ENCODE measurements at regions of chr1 and their contacts with region 1.

Region 1: DNA sequence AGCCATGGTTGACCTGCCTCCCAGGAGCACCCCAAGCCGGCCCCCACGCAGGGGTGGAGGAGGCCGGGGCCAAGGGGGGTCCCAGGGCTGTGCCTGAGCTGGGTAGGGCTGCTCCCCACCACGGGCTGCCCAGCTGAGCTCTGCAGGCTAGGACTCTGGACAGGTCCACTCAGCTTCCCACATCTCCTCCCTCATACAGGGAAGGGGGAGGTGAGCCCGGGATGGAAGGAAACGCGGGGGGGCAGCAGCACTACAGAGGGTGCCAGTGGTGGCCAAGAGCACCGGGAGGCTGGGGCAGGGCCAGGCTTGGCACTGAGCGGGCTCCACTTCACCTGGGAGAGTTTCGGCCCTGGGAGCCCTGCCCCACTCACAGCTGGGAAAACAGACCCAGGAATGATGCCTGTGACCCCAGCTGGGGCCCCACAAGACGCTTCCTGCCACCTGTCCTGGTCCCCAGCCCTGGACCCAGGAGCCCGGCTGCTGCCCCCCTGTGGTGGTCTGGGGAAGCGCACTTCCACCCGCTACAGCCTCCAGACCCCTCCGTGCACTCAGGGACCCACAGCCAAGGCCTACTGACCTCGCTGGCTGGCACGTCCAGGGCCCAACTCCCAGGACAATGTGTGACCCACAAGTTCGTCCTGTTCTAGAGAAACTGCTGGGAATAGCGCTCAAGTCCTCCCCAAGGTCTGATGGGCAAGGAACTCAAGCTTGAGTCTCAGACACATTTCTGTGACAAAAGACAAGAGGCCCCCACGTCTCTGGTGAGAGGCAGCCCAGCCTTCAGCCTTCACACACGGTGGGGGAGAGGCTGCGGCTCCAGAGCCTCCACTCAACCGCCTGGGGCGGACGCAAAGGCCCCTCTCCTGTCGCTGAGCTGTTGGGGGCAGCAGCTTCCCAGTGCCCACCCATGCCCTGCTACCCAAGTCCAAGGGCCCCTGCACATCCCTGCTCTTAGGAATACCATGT is 3.0 kb downstream of the AURKAIP1 start:
- DNase-seq: peak; percentile 86
- H3K4me3 Mint-ChIP-seq: peak overlapping the region; percentile 59
- H3K27ac Mint-ChIP-seq: peak overlapping the region; percentile 64
- H3K4me1 Mint-ChIP-seq: peaks cover 50% of the 10 kb centered on the region
- H3K27me3 Mint-ChIP-seq: no peaks in the 10 kb centered on the region

Region 2: DNA sequence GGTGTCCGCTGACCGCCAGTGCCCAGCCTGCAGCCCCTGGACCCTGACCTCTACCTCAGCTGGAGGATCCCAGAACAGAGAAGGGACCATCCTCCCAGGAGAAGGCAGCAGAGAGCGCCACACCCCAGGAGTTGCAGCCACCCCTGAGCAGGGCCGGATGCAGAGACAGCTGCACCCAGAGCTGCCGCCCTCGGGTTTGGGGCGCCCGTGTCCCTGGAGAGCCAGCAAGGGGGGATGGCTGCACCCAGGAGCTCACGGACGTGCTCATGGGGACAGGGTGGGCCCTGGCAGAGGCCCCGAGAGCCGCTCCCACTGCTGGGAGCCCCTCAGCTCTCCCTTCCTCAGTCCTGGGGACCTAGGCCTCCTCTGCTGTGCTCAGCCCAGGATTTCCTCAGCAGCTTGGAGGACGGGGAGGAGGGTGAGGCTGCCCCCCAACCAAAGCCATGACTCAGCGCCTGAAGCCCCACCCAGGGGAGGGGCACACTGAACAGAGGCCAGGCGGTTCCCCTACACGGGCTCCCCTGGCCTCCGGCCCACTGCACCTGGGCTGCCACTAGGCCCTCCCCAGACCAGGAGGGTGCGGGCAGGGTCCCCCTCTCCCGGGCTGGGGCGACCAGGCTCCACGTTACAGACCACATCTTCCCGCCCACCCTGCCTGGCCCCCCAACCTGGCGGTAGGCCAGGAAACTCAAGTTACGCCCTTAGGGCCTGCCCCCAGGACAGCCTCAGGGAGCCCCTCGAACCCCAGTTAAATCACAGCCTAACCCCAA is 66.5 kb before region 1 on chr1:
- CTCF ChIA-PET with region 1: interaction called, 12 read pairs
- DNase-seq: peak; percentile 86
- H3K4me3 Mint-ChIP-seq: peak overlapping the region; percentile 89
- H3K27ac Mint-ChIP-seq: peak overlapping the region; percentile 93
- H3K4me1 Mint-ChIP-seq: peaks cover 26% of the 10 kb centered on the region
- H3K27me3 Mint-ChIP-seq: no peaks in the 10 kb centered on the region

Region 3: DNA sequence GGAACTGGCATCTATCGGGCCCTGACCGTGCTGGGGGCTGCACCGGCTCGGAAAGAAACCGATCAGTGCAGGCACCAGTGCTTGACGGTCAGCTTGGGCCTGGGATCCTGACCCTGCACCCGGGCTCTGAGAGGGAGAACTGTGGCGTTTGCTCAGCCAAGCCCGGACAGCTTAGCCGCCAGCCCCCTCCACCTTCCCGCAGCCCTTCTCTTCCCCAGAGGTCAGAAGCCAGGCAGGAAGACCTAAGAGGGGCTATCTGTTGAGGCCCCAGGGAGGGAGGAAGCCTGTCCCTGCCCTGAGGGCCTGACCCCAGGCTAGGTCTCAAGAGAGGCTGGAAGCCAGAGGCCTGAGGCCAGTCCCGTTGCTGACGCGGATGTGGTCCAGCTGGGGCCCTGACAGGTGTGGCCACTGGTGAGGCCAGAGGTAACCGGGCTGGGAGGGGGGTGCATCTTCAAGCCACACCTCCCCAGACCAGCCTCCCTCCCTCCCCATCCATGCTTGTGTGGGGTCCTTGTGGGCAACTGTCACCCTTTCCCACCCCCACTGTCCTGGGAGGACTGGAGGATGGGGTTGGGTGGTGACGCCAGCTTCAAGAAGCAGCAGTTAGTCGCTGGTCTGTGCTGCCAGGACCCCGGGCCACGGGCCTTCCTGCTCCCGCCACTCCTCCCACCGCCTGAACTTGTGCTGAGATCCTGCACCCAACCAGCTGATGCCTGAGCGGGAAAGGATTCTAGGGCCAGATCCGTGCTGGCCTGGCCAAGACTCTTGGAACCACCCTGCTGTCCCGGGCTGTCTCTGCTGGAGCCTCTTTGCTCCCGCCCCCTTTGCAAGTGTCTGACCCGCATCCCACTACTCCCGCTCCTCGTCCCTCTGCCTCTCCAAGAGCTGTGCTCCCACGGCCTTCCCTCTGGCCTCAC is 20.3 kb before region 1 on chr1:
- CTCF ChIA-PET with region 1: interaction called, 21 read pairs
- DNase-seq: no peak
- H3K4me3 Mint-ChIP-seq: peak overlapping the region; percentile 63
- H3K27ac Mint-ChIP-seq: peak overlapping the region; percentile 46
- H3K4me1 Mint-ChIP-seq: peaks cover 31% of the 10 kb centered on the region
- H3K27me3 Mint-ChIP-seq: peaks cover 51% of the 10 kb centered on the region

Region 4: GRCh38 chr1:1399187-1399871 is 27.3 kb after region 1 on chr1 and contains the start of gene CCNL2:
- CTCF ChIA-PET with region 1: interaction called, 12 read pairs
- DNase-seq: peak; percentile 99
- H3K4me3 Mint-ChIP-seq: peak within 1 kb of the TSS; percentile 89
- H3K27ac Mint-ChIP-seq: peak within 1 kb of the TSS; percentile 88
- H3K4me1 Mint-ChIP-seq: peaks cover 54% of the 10 kb centered on the region
- H3K27me3 Mint-ChIP-seq: no peaks in the 10 kb centered on the region

Region 5: DNA sequence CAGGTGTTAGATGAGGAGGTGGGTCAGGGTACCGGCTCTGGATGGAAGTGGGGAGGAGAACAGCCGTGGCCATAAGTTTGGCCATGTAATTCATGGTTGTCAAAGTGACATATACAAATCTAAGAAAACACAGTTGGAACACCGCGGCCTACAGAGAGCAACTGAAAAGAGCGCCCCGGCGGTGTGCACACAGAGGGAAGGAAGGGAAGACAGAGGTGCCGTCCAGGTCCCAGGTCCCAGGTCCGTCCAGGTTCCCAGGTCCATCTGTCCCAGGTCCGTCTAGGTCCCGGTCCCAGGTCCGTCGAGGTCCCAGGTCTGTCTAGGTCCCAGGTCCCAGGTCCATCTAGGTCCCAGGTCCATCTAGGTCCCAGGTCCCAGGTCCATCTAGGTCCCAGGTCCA is 39.6 kb after region 1 on chr1:
- CTCF ChIA-PET with region 1: no interaction called
- DNase-seq: no peak
- H3K4me3 Mint-ChIP-seq: no peak overlapping the region
- H3K27ac Mint-ChIP-seq: no peak overlapping the region
- H3K4me1 Mint-ChIP-seq: peaks cover 19% of the 10 kb centered on the region
- H3K27me3 Mint-ChIP-seq: peaks cover 5% of the 10 kb centered on the region

Measured in activated naive CD4-positive, alpha-beta T cell treated with anti-CD3 and anti-CD28 coated beads, Interleukin-2, amount 10 ng/mL, durations not matched to agents 7 days and 5 days (primary cell).